Naive thymus-derived CD4-positive, alpha-beta T cell (primary cell): ENCODE measurements at regions of chr3 and their contacts with region 1.

Region 1: GRCh38 chr3:49007068-49007770 is at the start of gene WDR6:
- DNase-seq: peak; percentile 86 to 98 (median 96)
- ATAC-seq: peak; percentile 95
- H3K4me3 ChIP-seq: peak within 1 kb of the TSS; percentile 96
- H3K4me3 Mint-ChIP-seq: peak within 1 kb of the TSS; percentile 94 to 100 (median 98)
- H3K27ac ChIP-seq: peak within 1 kb of the TSS; percentile 90
- H3K27ac Mint-ChIP-seq: peak within 1 kb of the TSS; percentile 95 to 100 (median 98)
- H3K4me1 ChIP-seq: peaks cover 8 to 16% of the 10 kb centered on the region in 2 donors
- H3K4me1 Mint-ChIP-seq: peaks cover 14 to 34% (median 28%) of the 10 kb centered on the region in 7 donors
- H3K27me3 ChIP-seq: no peaks in the 10 kb centered on the region
- H3K27me3 Mint-ChIP-seq: no peaks in the 10 kb centered on the region
- total RNA-seq, gene WDR6: 170 to 335 (median 204) TPM

Region 2: GRCh38 chr3:48795997-48796732 is 211.1 kb before region 1 on chr3:
- CTCF ChIA-PET with region 1: no interaction called
- POLR2A ChIA-PET with region 1: no interaction called
- intact Hi-C with region 1: no loop called
- DNase-seq: no peak
- ATAC-seq: no peak
- H3K4me3 ChIP-seq: no peak overlapping the region
- H3K4me3 Mint-ChIP-seq: no peak overlapping the region
- H3K27ac ChIP-seq: no peak overlapping the region
- H3K27ac Mint-ChIP-seq: peak overlapping the region in 4 of 9 donors; percentile 9 to 63 (median 40)
- H3K4me1 ChIP-seq: no peaks in the 10 kb centered on the region
- H3K4me1 Mint-ChIP-seq: peaks cover 0 to 12% (median 5%) of the 10 kb centered on the region in 7 donors
- H3K27me3 ChIP-seq: no peaks in the 10 kb centered on the region
- H3K27me3 Mint-ChIP-seq: no peaks in the 10 kb centered on the region

Region 3: GRCh38 chr3:48989796-48990635 is 17.2 kb before region 1 on chr3 and contains the start of gene P4HTM:
- CTCF ChIA-PET with region 1: interaction called, 13 read pairs
- POLR2A ChIA-PET with region 1: interaction called, 130 read pairs
- intact Hi-C with region 1: loop called (anchors 1 kb)
- DNase-seq: peak; percentile 36 to 83 (median 55)
- ATAC-seq: peak; percentile 68
- H3K4me3 ChIP-seq: peak within 1 kb of the TSS; percentile 96
- H3K4me3 Mint-ChIP-seq: peak within 1 kb of the TSS; percentile 89 to 97 (median 93)
- H3K27ac ChIP-seq: peak within 1 kb of the TSS; percentile 82
- H3K27ac Mint-ChIP-seq: peak within 1 kb of the TSS; percentile 87 to 95 (median 90)
- H3K4me1 ChIP-seq: peaks cover 24% of the 10 kb centered on the region in 2 donors
- H3K4me1 Mint-ChIP-seq: peaks cover 27 to 56% (median 42%) of the 10 kb centered on the region in 7 donors
- H3K27me3 ChIP-seq: no peaks in the 10 kb centered on the region
- H3K27me3 Mint-ChIP-seq: no peaks in the 10 kb centered on the region
- total RNA-seq, gene P4HTM: 37.9 to 74.7 (median 53.1) TPM

Region 4: GRCh38 chr3:49028673-49029562 is 21.7 kb after region 1 on chr3 and contains the start of gene IMPDH2:
- CTCF ChIA-PET with region 1: interaction called, 5 read pairs
- POLR2A ChIA-PET with region 1: interaction called, 31 read pairs
- intact Hi-C with region 1: loop called in 1 of 2 experiments (anchors 1 kb)
- DNase-seq: peak; percentile 89 to 95 (median 93)
- ATAC-seq: peak; percentile 97
- H3K4me3 ChIP-seq: peak within 1 kb of the TSS; percentile 74
- H3K4me3 Mint-ChIP-seq: peak within 1 kb of the TSS; percentile 86 to 96 (median 94)
- H3K27ac ChIP-seq: peak within 1 kb of the TSS; percentile 98
- H3K27ac Mint-ChIP-seq: peak within 1 kb of the TSS; percentile 92 to 100 (median 98)
- H3K4me1 ChIP-seq: peaks cover 10 to 11% of the 10 kb centered on the region in 2 donors
- H3K4me1 Mint-ChIP-seq: peaks cover 7 to 52% (median 34%) of the 10 kb centered on the region in 7 donors
- H3K27me3 ChIP-seq: no peaks in the 10 kb centered on the region
- H3K27me3 Mint-ChIP-seq: no peaks in the 10 kb centered on the region
- total RNA-seq, gene IMPDH2: 102 to 206 (median 121) TPM

Region 5: GRCh38 chr3:49411968-49412631 is 404.9 kb after region 1 on chr3 and contains the starts of genes RHOA and TCTA:
- CTCF ChIA-PET with region 1: no interaction called
- POLR2A ChIA-PET with region 1: no interaction called
- intact Hi-C with region 1: loop called in 1 of 2 experiments (anchors 1 kb)
- DNase-seq: peak; percentile 94 to 100 (median 99)
- ATAC-seq: peak; percentile 90
- H3K4me3 ChIP-seq: peak within 1 kb of the TSS; percentile 86
- H3K4me3 Mint-ChIP-seq: peak within 1 kb of the TSS; percentile 82 to 97 (median 94)
- H3K27ac ChIP-seq: peak within 1 kb of the TSS; percentile 96
- H3K27ac Mint-ChIP-seq: peak within 1 kb of the TSS; percentile 88 to 97 (median 95)
- H3K4me1 ChIP-seq: peaks cover 61 to 65% of the 10 kb centered on the region in 2 donors
- H3K4me1 Mint-ChIP-seq: peaks cover 51 to 82% (median 71%) of the 10 kb centered on the region in 7 donors
- H3K27me3 ChIP-seq: no peaks in the 10 kb centered on the region
- H3K27me3 Mint-ChIP-seq: peaks cover 0 to 2% (median 0%) of the 10 kb centered on the region in 5 donors
- total RNA-seq, gene RHOA: 212 to 411 (median 218) TPM
- total RNA-seq, gene TCTA: 24.9 to 34.5 (median 28.5) TPM